GM18951 (cell line): ENCODE measurements at regions of chr10 and their contacts with region 1.

Region 1: DNA sequence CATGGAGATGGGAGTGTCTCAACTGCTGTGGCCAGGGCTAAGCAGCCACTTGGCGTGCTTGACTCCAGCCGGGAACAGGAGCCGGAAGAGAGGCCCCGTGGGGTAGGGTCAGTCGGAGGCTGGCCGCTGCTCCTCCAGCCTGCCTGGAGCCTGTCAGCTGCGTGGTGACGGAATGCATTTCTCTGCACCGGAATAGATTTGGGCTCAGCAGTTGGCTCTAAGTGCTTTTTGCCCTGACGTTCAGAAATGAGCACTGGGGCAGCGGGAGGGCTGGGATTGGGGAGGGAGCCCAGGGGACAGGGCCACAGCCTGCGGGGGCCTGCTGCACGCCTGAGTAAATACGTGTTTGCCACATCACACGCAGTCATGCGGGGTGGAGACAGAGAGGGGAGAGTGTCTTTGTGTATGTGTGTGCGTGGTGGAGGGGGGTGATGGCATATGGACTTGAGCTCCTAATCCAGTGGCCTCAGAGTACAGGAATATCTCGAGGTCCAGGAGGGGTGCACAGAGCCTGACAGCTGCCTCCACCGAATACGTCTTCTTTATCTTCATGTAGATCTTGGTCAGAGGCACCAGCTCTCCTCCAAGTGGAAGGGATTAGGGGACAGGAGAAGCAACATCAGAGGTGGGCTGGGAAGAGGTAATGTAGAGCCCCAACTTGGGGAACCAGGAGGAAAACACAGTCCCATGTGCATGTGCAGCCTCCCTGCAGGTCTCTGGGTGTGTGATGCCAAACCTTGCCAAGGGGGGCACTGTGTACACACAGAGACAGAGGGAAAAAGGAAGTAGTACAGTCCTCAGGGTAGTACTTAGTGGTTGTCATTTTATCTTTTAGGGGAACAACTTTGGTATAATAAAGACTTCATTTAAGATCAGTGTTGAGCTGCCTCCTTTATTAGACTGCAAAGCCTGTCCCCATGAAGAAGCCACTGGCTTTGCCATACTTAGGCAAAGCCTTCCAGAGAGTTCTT is 151.4 kb downstream of the CDH23 start:
- POLR2A ChIP-seq: no peak

Region 2: GRCh38 chr10:71443676-71444075 is 104.5 kb before region 1 on chr10:
- in situ Hi-C with region 1: loop called (anchors 10 kb)
- POLR2A ChIP-seq: no peak